Activated naive CD4-positive, alpha-beta T cell treated with anti-CD3 and anti-CD28 coated beads, Interleukin-2, amount 10 ng/mL, durations not matched to agents 7 days and 5 days (primary cell): ENCODE measurements at regions of chrX and their contacts with region 1.

Region 1: GRCh38 chrX:109709129-109709631 is 23.9 kb downstream of the ACSL4 start:
- DNase-seq: no peak
- H3K4me3 Mint-ChIP-seq: no peak overlapping the region
- H3K27ac Mint-ChIP-seq: peak overlapping the region; percentile 79
- H3K4me1 Mint-ChIP-seq: peaks cover 55% of the 10 kb centered on the region
- H3K27me3 Mint-ChIP-seq: no peaks in the 10 kb centered on the region

Region 2: DNA sequence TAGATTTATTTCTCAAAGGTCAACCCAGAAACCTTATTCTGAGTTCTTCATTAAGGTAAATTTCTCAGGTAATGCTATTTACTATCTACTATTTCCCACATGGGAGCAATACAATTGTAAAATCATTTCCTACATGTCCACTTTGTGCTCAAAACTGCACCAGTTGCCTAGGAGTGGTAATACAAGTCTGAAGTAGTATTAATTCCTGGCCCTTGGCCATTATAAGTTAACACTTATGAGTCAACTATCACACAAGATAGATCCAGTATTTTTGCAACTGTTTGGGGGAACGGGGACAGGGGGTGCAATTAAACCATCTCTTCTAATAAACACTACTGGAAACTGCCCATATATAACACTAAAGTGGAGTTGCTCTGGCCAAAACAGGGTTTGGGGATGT is 25.0 kb before region 1 on chrX:
- CTCF ChIA-PET with region 1: no interaction called
- DNase-seq: no peak
- H3K4me3 Mint-ChIP-seq: no peak overlapping the region
- H3K27ac Mint-ChIP-seq: no peak overlapping the region
- H3K4me1 Mint-ChIP-seq: peaks cover 3% of the 10 kb centered on the region
- H3K27me3 Mint-ChIP-seq: no peaks in the 10 kb centered on the region

Region 3: GRCh38 chrX:109732780-109733657 is 23.8 kb after region 1 on chrX and contains the start of gene ACSL4:
- CTCF ChIA-PET with region 1: interaction called, 10 read pairs
- DNase-seq: peak; percentile 89
- H3K4me3 Mint-ChIP-seq: peak within 1 kb of the TSS; percentile 89
- H3K27ac Mint-ChIP-seq: peak within 1 kb of the TSS; percentile 97
- H3K4me1 Mint-ChIP-seq: peaks cover 46% of the 10 kb centered on the region
- H3K27me3 Mint-ChIP-seq: no peaks in the 10 kb centered on the region